ENCODE measurements at regions of chr1 and their contacts with region 1.

Region 1: DNA sequence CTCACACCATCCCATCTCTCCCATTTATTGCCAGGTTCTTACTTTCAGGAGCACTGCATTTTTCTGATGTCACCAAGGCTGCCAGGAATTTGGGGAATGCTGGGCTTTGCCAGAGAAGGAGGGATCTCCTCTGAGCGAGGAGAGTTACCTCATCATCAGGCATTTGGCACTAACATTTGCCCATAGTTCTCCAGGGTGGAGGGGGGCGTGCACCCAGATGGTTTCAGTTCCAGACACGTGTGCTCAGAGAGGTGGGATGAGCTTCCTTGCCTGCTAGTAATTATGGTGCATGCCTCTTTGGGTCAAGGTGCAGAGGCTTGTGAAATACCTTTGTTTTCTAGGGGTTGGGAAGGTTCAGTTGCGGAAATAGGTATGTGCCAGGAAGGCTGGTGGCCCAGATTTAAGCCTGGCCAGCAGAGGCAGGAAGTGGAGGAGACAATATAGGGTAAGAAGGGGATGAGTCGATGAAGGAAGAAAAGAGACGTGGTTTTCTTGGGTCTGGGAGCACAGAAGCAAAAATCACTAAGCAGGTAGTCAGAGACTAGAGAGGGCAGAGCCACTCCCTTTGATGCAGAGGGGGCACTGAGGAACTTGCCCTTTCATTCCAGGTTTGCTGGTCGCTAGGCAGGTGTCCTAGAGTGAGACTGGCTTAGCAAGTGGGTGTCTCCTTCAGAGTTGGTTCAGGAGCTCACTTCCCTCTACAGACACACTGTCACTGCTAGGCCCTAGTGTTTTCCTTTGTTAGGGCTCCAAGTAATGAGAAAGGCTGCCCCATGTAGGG is 7.2 kb downstream of the TUFT1 start:
- DNase-seq: peak; percentile 98
- ATAC-seq: peak; percentile 95
- H3K4me3 ChIP-seq: peak overlapping the region; percentile 19 to 59 (median 21); a peak in 3 of 6 replicates
- H3K27ac ChIP-seq: peak overlapping the region; percentile 79
- H3K4me1 ChIP-seq: peaks cover 54% of the 10 kb centered on the region
- H3K27me3 ChIP-seq: no peaks in the 10 kb centered on the region
- CTCF ChIP-seq: 0 out of 2 replicates have a peak, but pooled peaks have one; percentile 4
- EP300 ChIP-seq: peak in 1 of 2 experiments; percentile 64; a peak in 1 of 4 replicates
- POLR2A ChIP-seq: peak in 1 of 2 experiments; percentile 34; a peak in 2 of 4 replicates
- RAD21 ChIP-seq: no peak

Region 2: GRCh38 chr1:151472856-151473731 is 74.2 kb before region 1 on chr1:
- CTCF ChIA-PET with region 1: no interaction called
- POLR2A ChIA-PET with region 1: no interaction called
- in situ Hi-C with region 1: no loop called
- intact Hi-C with region 1: no loop called
- DNase-seq: no peak
- ATAC-seq: peak; percentile 59; the same call in 2 of the 3 replicates
- H3K4me3 ChIP-seq: peak overlapping the region; percentile 51 to 56 (median 52); a peak in 5 of 6 replicates
- H3K27ac ChIP-seq: no peak overlapping the region
- H3K4me1 ChIP-seq: peaks cover 11% of the 10 kb centered on the region; the same call in 1 of the 2 replicates
- H3K27me3 ChIP-seq: no peaks in the 10 kb centered on the region; a peak in 1 of 5 replicates
- CTCF ChIP-seq: no peak
- EP300 ChIP-seq: no peak
- POLR2A ChIP-seq: no peak
- RAD21 ChIP-seq: no peak

Region 3: GRCh38 chr1:151568626-151569088 is 21.3 kb after region 1 on chr1:
- CTCF ChIA-PET with region 1: no interaction called
- POLR2A ChIA-PET with region 1: interaction called, 15 read pairs
- in situ Hi-C with region 1: no loop called
- intact Hi-C with region 1: loop called (anchors 2 kb)
- DNase-seq: no peak
- ATAC-seq: no peak
- H3K4me3 ChIP-seq: no peak overlapping the region
- H3K27ac ChIP-seq: no peak overlapping the region
- H3K4me1 ChIP-seq: peaks cover 43% of the 10 kb centered on the region
- H3K27me3 ChIP-seq: no peaks in the 10 kb centered on the region
- CTCF ChIP-seq: no peak
- EP300 ChIP-seq: no peak
- POLR2A ChIP-seq: no peak
- RAD21 ChIP-seq: no peak

Region 4: DNA sequence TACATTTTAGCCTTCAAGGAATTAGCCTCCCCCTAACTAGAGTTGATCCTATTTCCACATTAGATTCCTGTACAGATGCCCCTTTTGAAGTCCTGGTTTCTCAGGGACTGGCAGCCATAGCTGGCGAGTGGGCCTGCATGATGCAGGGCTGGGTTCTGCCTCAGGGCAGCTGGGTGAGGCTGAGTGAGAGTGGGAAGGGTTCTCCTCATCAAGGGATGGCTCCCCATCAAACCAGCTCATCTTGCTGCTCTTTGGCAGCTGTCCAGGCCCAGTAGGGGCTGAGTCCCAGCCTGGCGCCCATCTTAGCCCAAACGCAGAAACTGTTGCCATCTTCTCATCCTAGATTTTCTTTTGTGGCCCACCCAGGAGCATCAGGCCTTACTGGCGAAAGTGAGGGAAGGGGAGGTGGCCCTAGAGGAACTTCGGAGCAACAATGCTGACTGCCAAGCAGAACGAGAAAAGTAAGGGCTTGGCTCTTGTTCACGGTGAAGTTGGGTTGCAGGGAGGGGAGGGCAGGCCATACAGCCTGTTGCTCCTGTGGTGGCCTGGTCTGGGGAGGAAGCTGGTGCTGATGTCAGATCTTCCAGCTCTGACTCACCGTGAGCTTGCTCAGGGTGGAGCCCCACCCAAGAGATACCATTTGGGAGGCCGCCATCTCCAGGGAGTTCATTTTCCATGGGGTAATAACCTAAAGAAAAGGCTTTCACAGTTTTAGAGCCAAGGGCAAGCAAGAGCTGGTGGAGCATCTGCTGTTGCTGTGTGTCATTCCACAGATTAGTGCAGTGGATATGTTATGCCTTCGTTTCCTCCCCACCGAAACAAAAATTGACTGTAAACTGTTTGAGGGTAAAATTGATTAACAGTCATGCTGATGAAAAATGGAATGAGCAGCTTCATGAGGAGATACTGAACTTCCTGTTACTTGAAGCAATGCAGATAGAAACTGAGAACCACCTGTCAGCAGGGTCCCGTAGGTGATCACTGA is 27.5 kb after region 1 on chr1:
- CTCF ChIA-PET with region 1: no interaction called
- POLR2A ChIA-PET with region 1: interaction called, 15 read pairs
- in situ Hi-C with region 1: no loop called
- intact Hi-C with region 1: no loop called
- DNase-seq: no peak
- ATAC-seq: no peak
- H3K4me3 ChIP-seq: no peak overlapping the region
- H3K27ac ChIP-seq: no peak overlapping the region
- H3K4me1 ChIP-seq: peaks cover 12% of the 10 kb centered on the region
- H3K27me3 ChIP-seq: no peaks in the 10 kb centered on the region
- CTCF ChIP-seq: no peak
- EP300 ChIP-seq: no peak
- POLR2A ChIP-seq: no peak
- RAD21 ChIP-seq: no peak